Endothelial cell of umbilical vein (primary cell): ENCODE measurements at regions of chr1 and their contacts with region 1.

Region 1: DNA sequence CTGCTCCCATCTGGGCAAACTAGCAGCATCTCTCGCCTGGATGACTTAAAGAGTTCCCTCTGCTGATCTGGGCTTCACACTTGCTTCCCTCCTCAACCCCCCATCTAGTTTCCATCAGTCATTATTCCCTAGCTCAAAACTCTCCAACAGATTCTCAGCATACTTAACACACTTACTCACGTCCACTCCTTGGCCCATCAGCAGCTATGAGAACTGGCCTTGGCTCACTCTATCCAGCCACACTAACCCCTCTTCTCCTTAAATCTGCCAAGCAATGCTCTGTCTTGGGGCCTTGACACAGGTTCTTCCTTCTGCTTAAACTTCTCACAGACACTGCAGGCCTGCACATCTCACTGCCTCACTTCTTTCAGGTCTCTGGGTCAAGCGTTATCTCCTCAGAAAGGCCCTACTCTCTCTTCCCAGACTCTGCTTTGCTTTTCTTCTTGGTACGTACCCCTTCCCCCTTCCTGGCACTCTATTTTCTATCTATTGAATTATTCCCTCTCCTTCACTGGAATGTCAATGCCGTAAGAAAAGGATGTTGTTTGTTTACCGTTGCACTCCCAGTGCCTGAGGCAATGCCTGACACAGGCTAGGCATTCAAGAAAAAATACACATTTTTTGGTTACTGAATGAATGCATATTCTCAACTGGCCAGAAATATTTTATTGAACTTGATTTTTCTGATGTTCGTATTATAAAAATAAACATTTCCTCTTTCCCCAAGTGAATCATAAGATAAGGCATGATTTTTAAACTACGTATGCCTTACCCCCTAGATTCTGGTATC is 41.4 kb downstream of the GNG12 start:
- DNase-seq: peak; percentile 87
- H3K4me3 ChIP-seq: no peak overlapping the region
- H3K27ac ChIP-seq: peak overlapping the region; percentile 92
- H3K4me1 ChIP-seq: peaks cover 96% of the 10 kb centered on the region
- H3K27me3 ChIP-seq: no peaks in the 10 kb centered on the region
- CTCF ChIP-seq: no peak
- POLR2A ChIP-seq: no peak

Region 2: DNA sequence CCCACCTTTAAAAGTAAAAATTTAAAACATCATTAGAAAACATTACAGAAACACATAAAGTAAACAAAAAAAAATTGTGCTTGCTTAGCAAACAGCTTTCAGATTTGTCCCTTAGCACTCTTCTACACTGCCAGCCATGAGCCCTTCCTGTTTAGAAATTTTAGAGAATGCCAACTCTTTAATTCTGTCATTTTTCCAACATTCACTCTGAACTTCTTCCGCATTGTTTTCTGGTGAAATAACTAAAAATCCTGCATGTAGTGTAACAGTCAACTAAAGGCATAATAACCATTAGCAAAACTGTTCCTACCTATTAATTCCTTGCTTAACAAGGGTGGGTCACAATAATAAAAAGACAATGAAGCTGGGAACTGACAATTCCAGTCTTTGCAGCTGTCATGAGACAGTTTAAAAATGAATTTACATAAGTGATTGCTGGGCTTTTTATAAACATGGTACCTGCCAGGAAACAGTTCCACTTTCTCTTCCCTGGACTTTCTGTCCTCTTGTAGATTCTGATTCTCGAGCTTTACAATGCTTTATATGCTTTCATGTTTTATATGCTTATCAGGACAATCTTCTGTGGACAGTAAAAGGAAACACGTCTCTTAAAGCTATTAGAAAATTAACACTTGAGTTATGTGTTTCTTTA is 22.4 kb after region 1 on chr1:
- CTCF ChIA-PET with region 1: interaction called, 5 read pairs
- POLR2A ChIA-PET with region 1: interaction called, 10 read pairs
- dilution Hi-C with region 1: no loop called
- intact Hi-C with region 1: loop called (anchors 2 kb)
- DNase-seq: peak; percentile 72
- H3K4me3 ChIP-seq: no peak overlapping the region
- H3K27ac ChIP-seq: peak overlapping the region; percentile 36
- H3K4me1 ChIP-seq: peaks cover 56% of the 10 kb centered on the region
- H3K27me3 ChIP-seq: no peaks in the 10 kb centered on the region
- CTCF ChIP-seq: no peak
- POLR2A ChIP-seq: no peak

Region 3: DNA sequence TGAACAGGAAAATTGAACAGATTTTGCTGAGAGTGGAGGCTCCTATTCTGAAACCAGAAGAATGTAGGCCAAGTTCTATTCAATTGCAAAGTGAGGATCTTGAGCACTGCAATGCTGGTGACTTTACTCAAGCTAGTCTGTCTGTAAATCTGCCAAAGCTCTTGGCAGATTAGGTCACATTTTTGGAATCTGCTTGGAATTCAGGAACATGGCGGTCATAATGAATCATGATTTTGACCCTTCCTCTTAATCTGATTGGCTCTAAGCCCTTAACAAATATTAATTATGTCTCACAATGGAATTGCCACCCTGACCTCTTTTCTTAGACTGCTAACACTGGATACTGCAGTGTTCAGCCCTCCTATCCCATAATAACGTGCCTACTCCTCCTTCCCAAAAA is 48.6 kb after region 1 on chr1:
- CTCF ChIA-PET with region 1: interaction called, 3 read pairs
- POLR2A ChIA-PET with region 1: no interaction called
- dilution Hi-C with region 1: no loop called
- intact Hi-C with region 1: loop called (anchors 2 kb)
- DNase-seq: peak; percentile 96
- H3K4me3 ChIP-seq: no peak overlapping the region
- H3K27ac ChIP-seq: peak overlapping the region; percentile 82
- H3K4me1 ChIP-seq: peaks cover 39% of the 10 kb centered on the region
- H3K27me3 ChIP-seq: no peaks in the 10 kb centered on the region
- CTCF ChIP-seq: no peak
- POLR2A ChIP-seq: peak; percentile 57